Common myeloid progenitor, CD34-positive (primary cell): ENCODE measurements at regions of chr10 and their contacts with region 1.

Region 1: DNA sequence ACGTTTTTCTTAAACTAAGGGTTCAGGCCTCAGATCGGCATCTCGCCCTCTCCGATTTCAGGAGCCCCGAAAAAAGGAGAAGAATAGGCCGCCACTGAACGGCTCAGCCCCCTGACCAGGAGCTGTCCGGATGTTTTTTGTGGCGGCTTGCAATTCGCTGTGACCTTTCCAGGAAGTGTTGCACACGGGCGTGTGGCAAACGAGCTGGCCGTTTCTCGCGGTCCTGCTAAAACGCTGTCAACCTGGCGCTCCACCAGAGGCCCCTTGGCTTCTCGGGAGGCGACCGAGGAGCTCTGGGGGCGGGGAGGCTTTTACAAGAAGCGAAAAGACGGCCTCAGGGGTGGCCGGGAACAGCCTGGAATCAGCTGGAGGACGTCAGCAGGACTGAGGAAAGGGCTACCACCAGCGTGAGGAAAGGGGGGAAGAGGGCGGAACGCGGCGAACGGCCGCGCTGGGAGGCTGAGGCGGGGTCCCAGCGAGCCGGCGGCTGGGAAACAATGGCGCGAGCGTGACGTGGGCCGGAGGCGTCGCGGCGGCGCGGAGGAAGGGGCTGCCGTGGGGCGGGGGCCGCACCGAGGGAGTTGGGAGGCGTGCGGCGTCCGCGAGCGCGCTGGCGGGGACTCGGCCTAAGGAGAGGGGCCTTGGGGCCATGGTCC is 493 bp downstream of the NT5C2 start:
- DNase-seq: peak; percentile 72 to 91 (median 87)
- H3K4me3 ChIP-seq: peak overlapping the region; percentile 84 to 93 (median 89)
- H3K27ac ChIP-seq: peak overlapping the region; percentile 90 to 96
- H3K4me1 ChIP-seq: peaks cover 35 to 61% (median 44%) of the 10 kb centered on the region in 4 experiments
- H3K27me3 ChIP-seq: no peaks in the 10 kb centered on the region

Region 2: DNA sequence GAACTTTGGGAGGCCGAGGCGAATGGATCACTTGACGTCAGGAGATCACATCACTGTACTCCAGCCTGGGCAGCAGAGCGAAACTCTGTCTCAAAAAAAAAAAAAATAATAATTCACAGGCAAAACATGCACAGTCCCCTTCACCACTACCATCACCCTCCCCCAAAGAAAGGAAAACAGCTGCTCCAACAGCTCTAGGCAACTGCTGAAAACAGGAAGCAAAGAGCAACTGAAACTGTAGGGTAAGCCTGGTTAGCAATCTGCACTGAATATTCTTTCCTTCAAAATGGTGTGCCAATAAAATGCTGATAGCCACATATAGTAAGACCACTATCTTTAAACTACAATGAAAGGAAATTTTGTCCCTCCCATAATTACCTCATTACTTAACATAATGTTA is 11.3 kb before region 1 on chr10:
- CTCF ChIA-PET with region 1: interaction called, 10 read pairs
- POLR2A ChIA-PET with region 1: interaction called, 10 read pairs
- DNase-seq: peak; percentile 90 to 97 (median 96)
- H3K4me3 ChIP-seq: peak overlapping the region in 4 of 7 experiments; percentile 15 to 59 (median 29)
- H3K27ac ChIP-seq: peak overlapping the region; percentile 86 to 95
- H3K4me1 ChIP-seq: peaks cover 51 to 94% (median 69%) of the 10 kb centered on the region in 4 experiments
- H3K27me3 ChIP-seq: no peaks in the 10 kb centered on the region

Region 3: DNA sequence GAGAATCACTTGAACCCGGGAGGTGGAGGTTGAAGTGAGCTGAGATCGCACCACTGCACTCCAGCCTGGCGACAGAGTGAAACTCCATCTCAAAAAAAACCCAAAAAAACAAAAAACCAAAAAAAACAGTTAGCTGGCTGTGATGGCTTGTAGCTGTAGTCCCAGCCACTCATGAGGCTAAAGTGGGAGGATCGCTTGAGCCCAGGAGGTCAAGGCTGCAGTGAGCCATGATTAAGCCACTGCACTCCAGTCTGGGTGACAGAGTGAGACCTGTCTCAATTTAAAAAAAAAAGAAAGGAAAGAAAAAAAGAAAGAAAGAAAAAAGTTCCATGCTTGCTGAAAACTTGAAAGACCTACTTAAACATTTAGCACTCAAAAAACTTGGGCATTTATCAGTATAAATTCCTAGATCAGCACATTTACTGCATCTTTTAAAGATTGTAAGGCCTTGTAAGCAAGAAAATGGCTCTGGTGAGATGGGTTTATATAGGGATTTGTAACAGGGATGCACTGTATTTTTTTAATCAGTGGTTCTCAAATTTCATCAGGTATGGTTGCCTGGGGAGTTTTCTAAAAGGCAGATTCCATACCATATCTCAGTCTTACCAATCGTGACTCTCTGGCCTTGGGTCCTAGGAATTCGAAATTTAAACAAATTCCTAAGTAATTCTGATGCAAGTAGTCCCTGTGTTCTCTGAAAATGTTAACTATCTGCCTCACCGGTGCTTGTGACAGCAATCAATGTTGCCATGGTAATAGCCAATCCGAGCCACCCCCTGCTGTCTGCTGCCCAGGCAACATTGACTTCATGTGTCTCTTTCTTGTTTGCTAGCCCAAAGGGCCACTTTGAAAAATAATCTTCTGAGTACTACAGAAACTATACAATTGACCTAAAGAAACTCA is 12.0 kb after region 1 on chr10:
- CTCF ChIA-PET with region 1: no interaction called
- POLR2A ChIA-PET with region 1: no interaction called
- DNase-seq: no peak
- H3K4me3 ChIP-seq: no peak overlapping the region
- H3K27ac ChIP-seq: no peak overlapping the region
- H3K4me1 ChIP-seq: peaks cover 0 to 12% (median 4%) of the 10 kb centered on the region in 4 experiments
- H3K27me3 ChIP-seq: no peaks in the 10 kb centered on the region